Naive thymus-derived CD4-positive, alpha-beta T cell (primary cell): ENCODE measurements at regions of chr2 and their contacts with region 1.

Region 1: GRCh38 chr2:43158259-43158880 is 68.0 kb downstream of the ZFP36L2 start:
- DNase-seq: peak in 3 of 9 donors; percentile 70 to 72 (median 71)
- ATAC-seq: peak; percentile 59
- H3K4me3 ChIP-seq: peak overlapping the region; percentile 18
- H3K4me3 Mint-ChIP-seq: peak overlapping the region; percentile 81 to 91 (median 86)
- H3K27ac ChIP-seq: peak overlapping the region; percentile 92
- H3K27ac Mint-ChIP-seq: peak overlapping the region; percentile 96 to 100 (median 99)
- H3K4me1 ChIP-seq: peaks cover 53 to 62% of the 10 kb centered on the region in 2 donors
- H3K4me1 Mint-ChIP-seq: peaks cover 47 to 95% (median 69%) of the 10 kb centered on the region in 7 donors
- H3K27me3 ChIP-seq: no peaks in the 10 kb centered on the region
- H3K27me3 Mint-ChIP-seq: no peaks in the 10 kb centered on the region

Region 2: DNA sequence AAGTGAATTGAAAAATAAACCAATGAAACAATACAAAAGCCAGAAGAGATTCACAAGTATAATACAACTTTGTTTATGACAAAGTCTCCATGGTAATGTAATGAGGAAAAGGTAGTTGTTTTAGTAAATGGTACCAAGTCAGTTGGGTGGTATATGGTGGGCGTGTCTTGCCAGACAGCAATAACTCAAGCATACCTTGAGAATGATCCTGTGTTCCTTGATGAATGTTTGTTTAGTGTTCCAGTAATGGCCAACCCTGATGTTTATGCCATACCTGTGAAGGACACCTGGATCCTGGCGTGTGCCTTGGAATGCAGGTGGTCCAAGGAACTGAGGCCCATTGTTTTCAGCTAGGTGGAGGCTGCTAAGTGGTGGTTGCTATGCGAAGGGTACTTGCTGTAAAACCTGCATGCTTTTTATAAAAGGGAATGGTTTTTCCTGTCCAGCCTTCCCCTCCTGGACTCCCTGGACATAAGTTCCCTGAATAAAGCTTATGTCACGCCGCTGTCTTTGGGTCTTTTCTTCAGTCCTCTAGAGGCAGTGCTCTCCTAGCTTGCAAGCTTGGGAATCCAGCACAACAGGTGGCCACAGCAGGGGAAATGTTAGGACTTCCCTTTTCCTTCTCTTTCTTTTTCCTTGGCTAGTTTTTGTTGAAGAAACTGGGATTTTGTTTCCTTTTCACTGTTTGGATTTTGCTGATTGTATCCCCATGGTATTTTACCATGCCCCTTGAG is 535.3 kb before region 1 on chr2:
- CTCF ChIA-PET with region 1: no interaction called
- POLR2A ChIA-PET with region 1: no interaction called
- intact Hi-C with region 1: no loop called
- DNase-seq: no peak
- ATAC-seq: no peak
- H3K4me3 ChIP-seq: no peak overlapping the region
- H3K4me3 Mint-ChIP-seq: no peak overlapping the region
- H3K27ac ChIP-seq: no peak overlapping the region
- H3K27ac Mint-ChIP-seq: peak overlapping the region in 1 of 9 donors; percentile 47
- H3K4me1 ChIP-seq: no peaks in the 10 kb centered on the region
- H3K4me1 Mint-ChIP-seq: peaks cover 2 to 16% (median 11%) of the 10 kb centered on the region in 7 donors
- H3K27me3 ChIP-seq: no peaks in the 10 kb centered on the region
- H3K27me3 Mint-ChIP-seq: no peaks in the 10 kb centered on the region

Region 3: DNA sequence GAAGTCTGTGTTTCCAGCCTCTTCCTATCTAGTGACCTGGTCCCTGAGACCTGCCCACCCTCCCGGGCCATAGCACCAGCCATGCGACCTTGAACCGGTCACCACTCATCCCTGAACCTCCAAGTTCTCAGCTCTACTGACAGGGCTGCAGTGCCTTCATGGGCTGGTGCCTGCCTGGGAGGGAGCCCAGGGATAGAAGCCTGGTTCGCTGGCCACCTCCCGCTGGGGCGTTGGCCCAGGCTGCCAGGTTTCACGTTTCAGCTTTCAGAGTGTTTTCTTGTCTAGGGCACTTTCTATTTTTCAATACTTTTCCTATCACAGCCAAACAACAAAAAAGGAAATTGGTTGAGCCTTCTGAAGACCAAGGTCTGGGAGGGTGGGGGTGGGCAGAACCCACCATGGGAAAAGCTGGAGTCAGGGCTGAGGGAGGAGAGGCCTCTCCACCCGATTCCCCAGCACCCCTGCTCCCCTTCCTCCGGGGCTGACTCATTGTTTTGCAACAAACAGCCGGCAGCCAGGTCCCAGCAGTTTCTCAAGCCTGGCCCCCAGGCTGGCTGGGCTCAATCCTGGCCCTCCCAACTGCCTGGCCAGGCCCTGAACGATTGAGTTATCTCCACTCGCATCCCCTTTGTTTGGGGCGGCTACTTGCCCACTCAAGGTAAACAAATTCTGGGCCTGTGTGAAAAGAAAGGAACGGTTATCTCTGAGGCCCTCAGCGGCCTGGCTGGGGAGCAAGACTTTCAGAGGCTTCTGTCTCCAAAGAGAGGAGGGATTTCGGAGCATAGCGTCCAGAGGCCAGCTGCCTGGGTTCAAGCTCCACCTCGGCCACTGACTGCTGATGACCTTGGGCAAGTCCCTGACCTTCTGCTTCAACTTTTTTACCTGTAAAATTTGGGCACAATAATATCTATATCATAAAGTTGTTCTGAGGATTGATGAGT is 20.5 kb after region 1 on chr2:
- CTCF ChIA-PET with region 1: interaction called, 5 read pairs
- POLR2A ChIA-PET with region 1: interaction called, 1,274 read pairs
- intact Hi-C with region 1: loop called (anchors 1 kb)
- DNase-seq: peak in 1 of 9 donors; percentile 30
- ATAC-seq: no peak
- H3K4me3 ChIP-seq: peak overlapping the region; percentile 17
- H3K4me3 Mint-ChIP-seq: peak overlapping the region; percentile 53 to 79 (median 71)
- H3K27ac ChIP-seq: peak overlapping the region; percentile 66
- H3K27ac Mint-ChIP-seq: peak overlapping the region; percentile 94 to 99 (median 97)
- H3K4me1 ChIP-seq: peaks cover 49 to 70% of the 10 kb centered on the region in 2 donors
- H3K4me1 Mint-ChIP-seq: peaks cover 52 to 78% (median 75%) of the 10 kb centered on the region in 7 donors
- H3K27me3 ChIP-seq: no peaks in the 10 kb centered on the region
- H3K27me3 Mint-ChIP-seq: no peaks in the 10 kb centered on the region

Region 4: GRCh38 chr2:43408407-43409160 is 250.2 kb after region 1 on chr2:
- CTCF ChIA-PET with region 1: no interaction called
- POLR2A ChIA-PET with region 1: no interaction called
- intact Hi-C with region 1: no loop called
- DNase-seq: no peak
- ATAC-seq: peak; percentile 87
- H3K4me3 ChIP-seq: no peak overlapping the region
- H3K4me3 Mint-ChIP-seq: no peak overlapping the region
- H3K27ac ChIP-seq: no peak overlapping the region
- H3K27ac Mint-ChIP-seq: no peak overlapping the region
- H3K4me1 ChIP-seq: no peaks in the 10 kb centered on the region
- H3K4me1 Mint-ChIP-seq: peaks cover 0 to 10% (median 0%) of the 10 kb centered on the region in 7 donors
- H3K27me3 ChIP-seq: no peaks in the 10 kb centered on the region
- H3K27me3 Mint-ChIP-seq: no peaks in the 10 kb centered on the region